CD8-positive, alpha-beta T cell (primary cell): ENCODE measurements at regions of chr1 and their contacts with region 1.

Region 1: GRCh38 chr1:160539990-160540858 is 17.2 kb upstream of the SLAMF6 start:
- DNase-seq: peak; percentile 19 to 86 (median 60)
- ATAC-seq: peak; percentile 91
- H3K4me3 ChIP-seq: peak overlapping the region in 1 of 2 experiments; percentile 19
- H3K4me3 Mint-ChIP-seq: peak overlapping the region; percentile 20
- H3K27ac ChIP-seq: peak overlapping the region; percentile 36 to 76
- H3K27ac Mint-ChIP-seq: peak overlapping the region; percentile 95
- H3K4me1 ChIP-seq: peaks cover 55% of the 10 kb centered on the region
- H3K4me1 Mint-ChIP-seq: peaks cover 58% of the 10 kb centered on the region
- H3K27me3 ChIP-seq: no peaks in the 10 kb centered on the region
- H3K27me3 Mint-ChIP-seq: no peaks in the 10 kb centered on the region
- CTCF ChIP-seq: no peak

Region 2: DNA sequence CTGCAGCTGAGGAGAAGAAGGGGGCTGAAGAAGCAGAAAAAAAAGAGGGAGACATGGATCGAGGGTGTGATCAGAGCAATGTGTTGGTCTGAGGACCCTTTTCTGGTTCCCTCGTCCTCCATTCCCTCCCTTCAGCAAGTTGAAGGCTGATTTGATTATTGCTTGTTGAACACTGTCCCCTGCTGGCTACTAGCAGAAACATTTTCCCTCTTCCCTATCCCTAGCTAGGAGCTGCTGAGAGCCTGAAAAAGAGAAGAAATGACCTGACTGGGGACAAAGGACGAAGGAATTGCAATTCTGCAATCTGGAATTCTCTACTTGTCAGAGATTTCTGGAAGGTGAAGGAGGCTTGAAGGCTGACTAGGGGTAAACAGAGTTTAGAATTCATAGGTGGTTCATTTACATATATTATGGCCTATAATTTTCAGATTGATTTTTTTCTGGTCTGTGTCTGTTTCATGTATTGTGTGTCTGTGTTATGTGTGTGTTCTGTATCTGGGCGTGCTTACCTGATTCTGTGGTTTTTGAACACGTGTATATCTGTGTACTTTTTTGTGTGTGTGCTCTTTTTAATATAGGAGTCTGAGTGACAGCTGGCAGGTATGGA is 163.6 kb before region 1 on chr1:
- CTCF ChIA-PET with region 1: no interaction called
- POLR2A ChIA-PET with region 1: no interaction called
- intact Hi-C with region 1: no loop called
- DNase-seq: peak in 5 of 9 experiments; percentile 13 to 75 (median 53)
- ATAC-seq: peak; percentile 61
- H3K4me3 ChIP-seq: no peak overlapping the region
- H3K4me3 Mint-ChIP-seq: no peak overlapping the region
- H3K27ac ChIP-seq: no peak overlapping the region
- H3K27ac Mint-ChIP-seq: no peak overlapping the region
- H3K4me1 ChIP-seq: peaks cover 12% of the 10 kb centered on the region
- H3K4me1 Mint-ChIP-seq: peaks cover 15% of the 10 kb centered on the region
- H3K27me3 ChIP-seq: no peaks in the 10 kb centered on the region
- H3K27me3 Mint-ChIP-seq: no peaks in the 10 kb centered on the region
- CTCF ChIP-seq: peak; percentile 65

Region 3: DNA sequence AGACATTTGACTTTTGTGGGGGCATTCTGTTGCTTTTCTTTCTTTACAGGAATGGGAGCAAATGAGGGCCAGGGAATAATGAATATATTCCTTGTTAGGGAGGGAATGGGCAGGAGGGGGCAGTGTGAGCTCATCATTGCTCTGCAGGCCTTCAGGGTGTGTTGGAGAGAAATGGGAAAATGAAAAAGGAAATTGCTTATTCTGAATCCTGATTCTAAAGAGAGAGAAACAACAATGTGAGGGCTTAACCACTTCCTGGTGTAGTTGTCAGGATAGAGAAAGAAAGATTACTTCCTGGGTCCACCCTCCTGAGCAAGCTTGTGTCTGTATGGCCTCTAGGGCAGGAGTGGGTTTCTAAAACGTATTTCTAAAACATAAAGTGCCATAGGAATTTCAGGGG is 111.6 kb before region 1 on chr1:
- CTCF ChIA-PET with region 1: interaction called, 25 read pairs
- POLR2A ChIA-PET with region 1: interaction called, 9 read pairs
- intact Hi-C with region 1: loop called (anchors 2 kb)
- DNase-seq: peak in 6 of 9 experiments; percentile 24 to 73 (median 54)
- ATAC-seq: peak; percentile 54
- H3K4me3 ChIP-seq: peak overlapping the region in 1 of 2 experiments; percentile 20
- H3K4me3 Mint-ChIP-seq: peak overlapping the region; percentile 55
- H3K27ac ChIP-seq: peak overlapping the region; percentile 50 to 86
- H3K27ac Mint-ChIP-seq: peak overlapping the region; percentile 86
- H3K4me1 ChIP-seq: peaks cover 63% of the 10 kb centered on the region
- H3K4me1 Mint-ChIP-seq: peaks cover 62% of the 10 kb centered on the region
- H3K27me3 ChIP-seq: no peaks in the 10 kb centered on the region
- H3K27me3 Mint-ChIP-seq: no peaks in the 10 kb centered on the region
- CTCF ChIP-seq: peak; percentile 41

Region 4: GRCh38 chr1:160504666-160505065 is 35.6 kb before region 1 on chr1:
- CTCF ChIA-PET with region 1: interaction called, 12 read pairs
- POLR2A ChIA-PET with region 1: no interaction called
- intact Hi-C with region 1: loop called in 1 of 2 experiments (anchors 10 kb)
- DNase-seq: no peak
- ATAC-seq: no peak
- H3K4me3 ChIP-seq: no peak overlapping the region
- H3K4me3 Mint-ChIP-seq: no peak overlapping the region
- H3K27ac ChIP-seq: peak overlapping the region in 1 of 2 experiments; percentile 3
- H3K27ac Mint-ChIP-seq: peak overlapping the region; percentile 37
- H3K4me1 ChIP-seq: peaks cover 25% of the 10 kb centered on the region
- H3K4me1 Mint-ChIP-seq: peaks cover 59% of the 10 kb centered on the region
- H3K27me3 ChIP-seq: no peaks in the 10 kb centered on the region
- H3K27me3 Mint-ChIP-seq: no peaks in the 10 kb centered on the region
- CTCF ChIP-seq: no peak

Region 5: GRCh38 chr1:160558660-160559380 is 18.6 kb after region 1 on chr1:
- CTCF ChIA-PET with region 1: interaction called, 8 read pairs
- POLR2A ChIA-PET with region 1: interaction called, 3 read pairs
- intact Hi-C with region 1: loop called in 1 of 2 experiments (anchors 2 kb)
- DNase-seq: peak in 3 of 9 experiments; percentile 35 to 70 (median 38)
- ATAC-seq: peak; percentile 22
- H3K4me3 ChIP-seq: peak overlapping the region in 1 of 2 experiments; percentile 31
- H3K4me3 Mint-ChIP-seq: peak overlapping the region; percentile 79
- H3K27ac ChIP-seq: peak overlapping the region; percentile 14 to 84
- H3K27ac Mint-ChIP-seq: peak overlapping the region; percentile 95
- H3K4me1 ChIP-seq: peaks cover 46% of the 10 kb centered on the region
- H3K4me1 Mint-ChIP-seq: peaks cover 80% of the 10 kb centered on the region
- H3K27me3 ChIP-seq: no peaks in the 10 kb centered on the region
- H3K27me3 Mint-ChIP-seq: no peaks in the 10 kb centered on the region
- CTCF ChIP-seq: no peak

Region 6: GRCh38 chr1:160575112-160575664 is 35.0 kb after region 1 on chr1:
- CTCF ChIA-PET with region 1: interaction called, 16 read pairs
- POLR2A ChIA-PET with region 1: interaction called, 3 read pairs
- intact Hi-C with region 1: loop called (anchors 1 to 5 kb)
- DNase-seq: peak in 2 of 9 experiments; percentile 31 to 52
- ATAC-seq: no peak
- H3K4me3 ChIP-seq: peak overlapping the region; percentile 20 to 50
- H3K4me3 Mint-ChIP-seq: peak overlapping the region; percentile 92
- H3K27ac ChIP-seq: peak overlapping the region; percentile 8 to 72
- H3K27ac Mint-ChIP-seq: peak overlapping the region; percentile 91
- H3K4me1 ChIP-seq: peaks cover 83% of the 10 kb centered on the region
- H3K4me1 Mint-ChIP-seq: peaks cover 85% of the 10 kb centered on the region
- H3K27me3 ChIP-seq: no peaks in the 10 kb centered on the region
- H3K27me3 Mint-ChIP-seq: no peaks in the 10 kb centered on the region
- CTCF ChIP-seq: no peak

Region 7: GRCh38 chr1:160597705-160598104 is 57.5 kb after region 1 on chr1:
- CTCF ChIA-PET with region 1: interaction called, 14 read pairs
- POLR2A ChIA-PET with region 1: interaction called, 3 read pairs
- intact Hi-C with region 1: no loop called
- DNase-seq: no peak
- ATAC-seq: no peak
- H3K4me3 ChIP-seq: no peak overlapping the region
- H3K4me3 Mint-ChIP-seq: no peak overlapping the region
- H3K27ac ChIP-seq: no peak overlapping the region
- H3K27ac Mint-ChIP-seq: no peak overlapping the region
- H3K4me1 ChIP-seq: no peaks in the 10 kb centered on the region
- H3K4me1 Mint-ChIP-seq: no peaks in the 10 kb centered on the region
- H3K27me3 ChIP-seq: no peaks in the 10 kb centered on the region
- H3K27me3 Mint-ChIP-seq: no peaks in the 10 kb centered on the region
- CTCF ChIP-seq: no peak

Region 8: DNA sequence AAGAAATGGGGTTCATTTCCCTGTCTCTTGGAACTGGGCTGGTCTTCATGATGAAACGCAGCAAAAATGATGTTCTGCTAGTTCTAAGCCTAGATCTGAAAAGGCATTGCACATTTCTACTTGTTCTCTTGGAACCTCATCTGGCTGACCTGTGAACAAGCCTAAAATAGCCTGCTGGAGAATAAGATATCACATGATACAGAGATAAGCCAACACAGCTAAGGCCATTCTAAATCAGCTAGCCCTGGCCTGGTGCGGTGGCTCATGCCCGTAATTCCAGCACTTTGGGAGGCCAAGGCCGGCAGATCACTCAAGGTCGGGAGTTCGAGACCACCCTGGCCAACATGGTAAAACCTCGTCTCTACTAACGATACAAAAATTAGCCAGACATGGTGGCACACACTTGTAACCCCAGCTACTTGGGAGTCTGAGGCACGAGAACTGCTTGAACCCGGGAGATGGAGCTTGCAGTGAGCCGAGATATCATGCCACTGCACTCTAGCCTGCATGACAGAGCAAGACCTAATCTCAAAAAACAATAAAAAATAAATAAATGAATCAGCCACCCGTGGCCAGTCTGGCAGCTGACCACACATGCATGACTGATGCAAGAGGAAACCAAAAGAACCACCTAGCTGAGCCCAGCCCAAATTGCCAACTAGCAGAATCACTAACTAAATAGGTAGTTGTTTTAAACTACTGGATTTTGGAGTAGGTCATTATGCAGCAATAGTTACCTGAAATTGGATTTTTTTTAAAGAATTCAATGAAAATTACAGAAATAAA is 304.4 kb after region 1 on chr1:
- CTCF ChIA-PET with region 1: no interaction called
- POLR2A ChIA-PET with region 1: no interaction called
- intact Hi-C with region 1: no loop called
- DNase-seq: peak in 2 of 9 experiments; percentile 27 to 33
- ATAC-seq: no peak
- H3K4me3 ChIP-seq: no peak overlapping the region
- H3K4me3 Mint-ChIP-seq: no peak overlapping the region
- H3K27ac ChIP-seq: no peak overlapping the region
- H3K27ac Mint-ChIP-seq: no peak overlapping the region
- H3K4me1 ChIP-seq: peaks cover 21% of the 10 kb centered on the region
- H3K4me1 Mint-ChIP-seq: peaks cover 49% of the 10 kb centered on the region
- H3K27me3 ChIP-seq: no peaks in the 10 kb centered on the region
- H3K27me3 Mint-ChIP-seq: no peaks in the 10 kb centered on the region
- CTCF ChIP-seq: no peak